Sigmoid colon (tissue), 7 donors: ENCODE measurements at regions of chr15 and their contacts with region 1.

Region 1: GRCh38 chr15:31365655-31366127 is 39.1 kb downstream of the KLF13 start:
- DNase-seq: peak; percentile 99
- H3K4me3 ChIP-seq: peak overlapping the region; percentile 29 to 44 (median 42)
- H3K27ac ChIP-seq: peak overlapping the region; percentile 81 to 92 (median 84)
- H3K4me1 ChIP-seq: peaks cover 0 to 75% (median 61%) of the 10 kb centered on the region in 4 donors
- H3K27me3 ChIP-seq: no peaks in the 10 kb centered on the region
- CTCF ChIP-seq: peak in 2 of 4 experiments; percentile 34 to 42
- EP300 ChIP-seq: peak; percentile 99 to 100 (median 100)
- POLR2A ChIP-seq: no peak

Region 2: GRCh38 chr15:31280046-31280830 is 85.5 kb before region 1 on chr15:
- intact Hi-C with region 1: no loop called
- DNase-seq: peak; percentile 67
- H3K4me3 ChIP-seq: no peak overlapping the region
- H3K27ac ChIP-seq: no peak overlapping the region
- H3K4me1 ChIP-seq: no peaks in the 10 kb centered on the region
- H3K27me3 ChIP-seq: peaks cover 0 to 2% (median 0%) of the 10 kb centered on the region in 3 donors
- CTCF ChIP-seq: no peak
- EP300 ChIP-seq: no peak
- POLR2A ChIP-seq: no peak

Region 3: DNA sequence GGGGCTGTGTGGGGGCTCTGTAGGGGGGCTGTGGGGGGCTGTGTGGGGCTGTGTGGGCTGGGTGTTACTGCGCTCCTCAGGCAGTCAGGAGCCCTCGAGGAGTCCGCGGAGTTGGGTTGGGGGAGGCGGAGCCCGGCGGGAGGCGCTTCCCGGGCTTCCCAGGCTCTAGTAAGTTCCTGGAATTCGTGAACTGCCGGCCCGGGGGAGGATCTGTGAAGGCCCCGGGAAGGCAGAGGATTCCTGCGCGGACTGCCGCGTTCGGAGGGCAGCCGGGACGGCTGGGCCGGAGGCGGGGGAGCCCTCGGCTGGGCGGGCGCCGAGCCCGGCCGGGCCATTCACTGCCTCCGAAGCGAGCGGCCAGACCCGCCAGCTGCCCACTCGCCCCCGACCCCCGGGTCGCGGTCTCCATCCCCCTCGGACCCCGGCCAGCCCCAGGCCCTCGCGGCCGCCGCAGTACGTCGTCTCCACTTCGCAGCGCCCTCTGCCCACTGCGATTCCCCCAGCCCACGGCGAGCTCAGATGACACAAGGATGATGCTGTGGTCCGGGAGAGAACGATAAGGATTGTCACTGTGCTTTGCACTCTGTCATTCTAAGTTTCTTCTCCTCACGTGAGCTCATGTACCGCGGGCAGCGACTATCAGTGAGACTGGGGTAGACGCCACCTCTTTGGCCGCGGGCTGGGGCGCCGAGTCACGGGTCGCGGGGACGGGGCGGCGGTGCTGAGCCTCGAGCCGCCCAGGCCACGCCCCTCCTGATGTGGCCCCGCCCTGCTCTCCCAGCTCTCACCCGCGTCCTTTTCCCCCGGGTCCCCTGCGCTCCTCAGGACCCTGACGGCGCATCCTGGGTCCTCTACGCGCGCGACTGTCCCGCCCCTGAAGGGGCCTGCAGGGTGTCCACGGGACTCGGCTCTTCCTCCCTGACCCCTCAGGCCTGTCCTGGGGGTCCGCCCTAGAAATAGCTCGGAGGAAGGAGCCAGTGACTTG is 26.3 kb after region 1 on chr15:
- intact Hi-C with region 1: loop called (anchors 2 kb)
- DNase-seq: peak; percentile 94
- H3K4me3 ChIP-seq: peak overlapping the region; percentile 37 to 83 (median 56)
- H3K27ac ChIP-seq: peak overlapping the region; percentile 78 to 94 (median 88)
- H3K4me1 ChIP-seq: peaks cover 0 to 39% (median 31%) of the 10 kb centered on the region in 4 donors
- H3K27me3 ChIP-seq: no peaks in the 10 kb centered on the region
- CTCF ChIP-seq: no peak
- EP300 ChIP-seq: peak in 1 of 4 donors; percentile 28
- POLR2A ChIP-seq: peak; percentile 84 to 85

Region 4: GRCh38 chr15:31435261-31435911 is 69.7 kb after region 1 on chr15:
- intact Hi-C with region 1: loop called (anchors 5 kb)
- DNase-seq: peak; percentile 89
- H3K4me3 ChIP-seq: peak overlapping the region in 3 of 4 donors; percentile 1 to 20 (median 6)
- H3K27ac ChIP-seq: peak overlapping the region; percentile 38 to 70 (median 50)
- H3K4me1 ChIP-seq: peaks cover 0 to 14% (median 13%) of the 10 kb centered on the region in 4 donors
- H3K27me3 ChIP-seq: no peaks in the 10 kb centered on the region
- CTCF ChIP-seq: peak; percentile 51 to 71 (median 69)
- EP300 ChIP-seq: no peak
- POLR2A ChIP-seq: no peak

Region 5: GRCh38 chr15:31488426-31489204 is 122.9 kb after region 1 on chr15:
- intact Hi-C with region 1: loop called (anchors 2 kb)
- DNase-seq: peak; percentile 87
- H3K4me3 ChIP-seq: no peak overlapping the region
- H3K27ac ChIP-seq: peak overlapping the region in 3 of 4 donors; percentile 26 to 60 (median 45)
- H3K4me1 ChIP-seq: peaks cover 0 to 20% (median 16%) of the 10 kb centered on the region in 4 donors
- H3K27me3 ChIP-seq: peaks cover 0 to 18% (median 5%) of the 10 kb centered on the region in 3 donors
- CTCF ChIP-seq: peak; percentile 77 to 95 (median 84)
- EP300 ChIP-seq: no peak
- POLR2A ChIP-seq: no peak

Region 6: DNA sequence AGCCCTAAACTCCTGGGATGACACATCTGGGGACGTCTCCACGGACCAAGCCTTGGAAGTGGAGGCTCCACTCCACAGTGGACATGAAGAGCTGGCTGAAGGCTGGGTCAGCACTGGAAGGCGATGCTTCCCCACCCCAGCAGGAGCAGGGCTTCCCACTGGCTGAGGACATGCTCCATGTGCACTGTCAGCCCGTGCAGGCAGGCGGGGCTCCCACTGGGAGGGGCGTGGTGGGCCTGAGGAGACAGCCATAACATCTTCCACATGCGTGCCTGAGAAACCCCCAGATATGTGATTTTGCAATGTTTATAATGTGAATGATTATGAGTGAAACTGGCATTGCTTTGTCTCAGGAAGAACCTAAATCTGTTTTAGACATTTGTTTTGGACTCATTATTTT is 192.2 kb after region 1 on chr15:
- intact Hi-C with region 1: no loop called
- DNase-seq: no peak
- H3K4me3 ChIP-seq: no peak overlapping the region
- H3K27ac ChIP-seq: no peak overlapping the region
- H3K4me1 ChIP-seq: no peaks in the 10 kb centered on the region
- H3K27me3 ChIP-seq: no peaks in the 10 kb centered on the region
- CTCF ChIP-seq: no peak
- EP300 ChIP-seq: no peak
- POLR2A ChIP-seq: no peak

Region 7: DNA sequence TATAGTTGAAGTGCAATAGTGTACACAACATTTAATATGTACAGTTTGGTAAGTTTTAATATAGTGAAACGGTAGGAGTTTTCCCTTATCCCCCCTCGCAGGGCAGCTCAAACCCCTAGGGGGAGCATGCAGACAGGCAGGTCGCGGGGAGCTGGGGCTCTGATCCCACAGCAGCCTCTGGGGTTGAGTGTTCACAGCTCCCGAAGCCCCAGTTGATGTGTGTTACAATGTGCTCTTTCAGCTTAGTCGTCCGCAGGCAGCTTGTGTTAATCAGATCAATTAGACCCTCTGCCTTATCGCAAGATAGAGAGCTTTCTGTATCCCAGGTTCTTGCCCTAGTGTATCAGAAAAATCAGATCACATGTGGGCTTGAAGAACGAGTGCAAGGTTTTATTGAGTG is 521.6 kb after region 1 on chr15:
- intact Hi-C with region 1: no loop called
- DNase-seq: no peak
- H3K4me3 ChIP-seq: no peak overlapping the region
- H3K27ac ChIP-seq: no peak overlapping the region
- H3K4me1 ChIP-seq: no peaks in the 10 kb centered on the region
- H3K27me3 ChIP-seq: peaks cover 0 to 4% (median 0%) of the 10 kb centered on the region in 3 donors
- CTCF ChIP-seq: no peak
- EP300 ChIP-seq: no peak
- POLR2A ChIP-seq: no peak